ENCODE measurements at regions of chr19 and their contacts with region 1.

Region 1: GRCh38 chr19:4471403-4472173 is 509 bp upstream of the HDGFL2 start:
- DNase-seq: peak; percentile 94 to 100 (median 99)
- H3K4me3 ChIP-seq: peak overlapping the region; percentile 64 to 99 (median 90)
- H3K27ac ChIP-seq: peak overlapping the region in 58 of 59 donors; percentile 45 to 96 (median 82)
- H3K27me3 ChIP-seq: no peaks in the 10 kb centered on the region
- CTCF ChIP-seq: peak in 6 of 56 donors; percentile 13 to 30 (median 22)

Region 2: GRCh38 chr19:3762501-3763459 is 708.8 kb before region 1 on chr19 and contains the start of gene MRPL54:
- intact Hi-C with region 1: loop called in 1 of 2 experiments (anchors 5 kb)
- DNase-seq: peak; percentile 96 to 99 (median 98)
- H3K4me3 ChIP-seq: peak within 1 kb of the TSS; percentile 64 to 100 (median 97)
- H3K27ac ChIP-seq: peak within 1 kb of the TSS; percentile 78 to 100 (median 99)
- H3K27me3 ChIP-seq: no peaks in the 10 kb centered on the region
- CTCF ChIP-seq: peak in 33 of 56 donors; percentile 2 to 49 (median 19)
- total RNA-seq, gene MRPL54: 21.6 to 65.1 (median 45.6) TPM

Region 3: GRCh38 chr19:4246767-4247593 is 224.6 kb before region 1 on chr19 and contains the start of gene YJU2:
- intact Hi-C with region 1: loop called in 1 of 2 experiments (anchors 5 kb)
- DNase-seq: peak; percentile 82 to 98 (median 95)
- H3K4me3 ChIP-seq: peak within 1 kb of the TSS; percentile 64 to 99 (median 83)
- H3K27ac ChIP-seq: peak within 1 kb of the TSS; percentile 80 to 99 (median 97)
- H3K27me3 ChIP-seq: no peaks in the 10 kb centered on the region
- CTCF ChIP-seq: peak; percentile 35 to 74 (median 60)
- total RNA-seq, gene YJU2: 13.4 to 26.3 (median 19.0) TPM

Region 4: DNA sequence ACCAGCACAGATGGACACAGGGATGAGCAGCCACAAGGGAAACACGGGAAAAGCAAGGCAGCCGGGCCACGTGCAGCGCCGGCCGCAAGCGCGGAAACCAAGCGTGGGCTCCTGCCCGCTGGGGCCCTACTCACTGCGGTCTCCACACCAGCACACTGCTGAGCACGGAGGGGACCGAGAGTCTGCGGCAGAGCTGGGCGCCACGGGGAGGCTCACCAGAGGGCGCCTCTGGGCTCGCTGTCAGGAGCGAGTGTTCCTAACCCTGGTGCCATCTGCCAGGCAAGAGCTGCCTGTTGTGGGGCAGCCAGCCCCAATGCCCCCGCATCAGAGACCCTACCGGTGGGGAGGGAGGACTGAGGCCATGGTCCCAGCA is 101.7 kb before region 1 on chr19:
- intact Hi-C with region 1: loop called in 1 of 2 experiments (anchors 5 kb)
- DNase-seq: peak in 9 of 10 donors; percentile 58 to 82 (median 68)
- H3K4me3 ChIP-seq: peak overlapping the region in 38 of 59 donors; percentile 1 to 40 (median 21)
- H3K27ac ChIP-seq: peak overlapping the region in 57 of 59 donors; percentile 13 to 99 (median 94)
- H3K27me3 ChIP-seq: no peaks in the 10 kb centered on the region
- CTCF ChIP-seq: peak in 53 of 56 donors; percentile 35 to 78 (median 63)

Region 5: GRCh38 chr19:4457654-4458395 is 13.8 kb before region 1 on chr19 and contains the start of gene UBXN6:
- intact Hi-C with region 1: loop called (anchors 1 kb)
- DNase-seq: peak; percentile 97 to 99 (median 99)
- H3K4me3 ChIP-seq: peak within 1 kb of the TSS; percentile 52 to 85 (median 72)
- H3K27ac ChIP-seq: peak within 1 kb of the TSS in 57 of 59 donors; percentile 17 to 95 (median 83)
- H3K27me3 ChIP-seq: no peaks in the 10 kb centered on the region
- CTCF ChIP-seq: peak in 47 of 56 donors; percentile 11 to 65 (median 35)
- total RNA-seq, gene UBXN6: 110 to 244 (median 164) TPM

Region 6: GRCh38 chr19:4754248-4754647 is 282.7 kb after region 1 on chr19:
- intact Hi-C with region 1: no loop called
- DNase-seq: no peak
- H3K4me3 ChIP-seq: no peak overlapping the region
- H3K27ac ChIP-seq: no peak overlapping the region
- H3K27me3 ChIP-seq: no peaks in the 10 kb centered on the region
- CTCF ChIP-seq: no peak

Measured in dorsolateral prefrontal cortex (tissue), 120 donors.